GM10248 (cell line): ENCODE measurements at regions of chr11 and their contacts with region 1.

Region 1: DNA sequence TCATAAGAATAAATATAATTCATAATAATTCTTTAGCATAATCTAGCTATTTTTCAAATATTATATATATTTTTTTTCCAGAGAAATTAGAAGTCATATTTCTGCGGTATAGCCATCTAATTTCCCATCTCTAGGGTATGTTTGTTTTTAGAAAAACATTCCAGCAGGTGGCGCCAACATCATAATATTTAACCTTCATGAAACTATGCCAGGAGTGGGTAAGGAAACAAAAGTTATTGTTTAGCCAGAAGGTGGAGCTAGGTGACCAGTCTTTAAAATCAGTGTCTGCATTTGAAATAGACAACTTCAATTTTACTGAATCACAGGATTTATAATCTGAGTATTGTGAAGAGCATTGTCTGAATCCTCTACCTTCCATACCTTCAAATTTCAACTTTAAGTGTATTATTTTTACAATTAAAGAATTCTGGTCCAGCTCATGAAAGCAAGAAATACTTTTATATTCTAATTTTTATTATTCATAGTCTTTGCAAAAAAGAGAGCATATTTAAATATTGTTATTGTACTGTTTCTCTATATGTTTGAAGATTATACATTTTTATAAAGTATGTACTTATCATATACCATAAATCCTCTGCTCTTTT is 15.7 kb upstream of the CCDC179 start:
- DNase-seq: peak; percentile 60
- CTCF ChIP-seq: peak; percentile 71

Region 2: GRCh38 chr11:22860241-22860640 is 15.7 kb before region 1 on chr11 and contains the start of gene CCDC179:
- CTCF ChIA-PET with region 1: interaction called, 13 read pairs
- POLR2A ChIA-PET with region 1: no interaction called
- DNase-seq: no peak
- CTCF ChIP-seq: no peak